ENCODE measurements at regions of chr22 and their contacts with region 1.

Region 1: GRCh38 chr22:38262051-38262795 is 10.6 kb downstream of the TMEM184B start:
- DNase-seq: peak; percentile 73
- CTCF ChIP-seq: peak; percentile 51

Region 2: DNA sequence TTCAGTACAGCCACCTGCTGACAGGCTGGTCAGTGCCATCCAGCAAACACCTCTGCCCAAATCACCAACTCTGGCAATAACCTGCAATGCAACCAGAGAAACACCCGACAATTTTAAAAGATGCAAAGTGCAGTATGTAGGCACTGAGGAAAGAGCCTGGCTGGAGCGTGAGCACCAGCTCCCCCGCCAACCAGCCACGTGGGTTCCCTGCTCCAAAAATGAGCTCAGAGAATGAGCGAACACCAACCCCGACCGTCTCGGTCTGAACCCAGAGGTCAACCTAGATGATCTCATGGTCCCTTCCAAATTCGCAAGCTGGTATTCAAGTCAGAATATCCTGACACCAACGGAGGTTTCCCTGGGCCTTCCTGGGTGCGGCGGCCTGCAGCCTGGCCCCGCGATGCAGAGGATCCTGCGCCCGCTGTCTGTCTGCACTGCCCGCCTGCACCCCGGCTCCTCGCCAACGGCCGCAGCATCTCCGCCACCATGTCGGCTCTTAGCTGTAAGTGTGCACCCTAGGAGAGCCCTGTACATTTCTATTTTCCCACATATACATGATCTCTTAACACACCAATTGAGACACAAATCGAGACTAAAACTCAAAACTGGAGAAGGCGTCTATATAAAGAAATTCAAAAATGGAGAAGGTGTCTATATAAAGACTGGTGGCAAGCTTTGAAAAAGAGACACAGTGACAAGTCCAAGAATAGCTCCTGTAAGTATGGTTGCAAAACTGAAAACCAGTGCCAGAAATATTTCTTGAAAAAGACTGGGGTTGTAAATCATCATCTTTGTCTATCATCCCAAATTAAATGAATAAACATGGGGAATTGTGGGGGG is 12.2 kb before region 1 on chr22:
- CTCF ChIA-PET with region 1: interaction called, 15 read pairs
- POLR2A ChIA-PET with region 1: no interaction called
- DNase-seq: no peak
- CTCF ChIP-seq: no peak